Caco-2 (cell line): ENCODE measurements at regions of chr12 and their contacts with region 1.

Region 1: GRCh38 chr12:62210422-62210821 is 49.8 kb upstream of the USP15 start:
- DNase-seq: peak in 1 of 2 experiments; percentile 34
- H3K4me3 ChIP-seq: no peak overlapping the region
- H3K4me3 Mint-ChIP-seq: no peak overlapping the region
- H3K27ac Mint-ChIP-seq: no peak overlapping the region
- H3K4me1 ChIP-seq: peaks cover 7% of the 10 kb centered on the region
- H3K4me1 Mint-ChIP-seq: no peaks in the 10 kb centered on the region
- H3K27me3 ChIP-seq: no peaks in the 10 kb centered on the region
- H3K27me3 Mint-ChIP-seq: peaks cover 3% of the 10 kb centered on the region
- CTCF ChIP-seq: peak; percentile 64 to 83

Region 2: DNA sequence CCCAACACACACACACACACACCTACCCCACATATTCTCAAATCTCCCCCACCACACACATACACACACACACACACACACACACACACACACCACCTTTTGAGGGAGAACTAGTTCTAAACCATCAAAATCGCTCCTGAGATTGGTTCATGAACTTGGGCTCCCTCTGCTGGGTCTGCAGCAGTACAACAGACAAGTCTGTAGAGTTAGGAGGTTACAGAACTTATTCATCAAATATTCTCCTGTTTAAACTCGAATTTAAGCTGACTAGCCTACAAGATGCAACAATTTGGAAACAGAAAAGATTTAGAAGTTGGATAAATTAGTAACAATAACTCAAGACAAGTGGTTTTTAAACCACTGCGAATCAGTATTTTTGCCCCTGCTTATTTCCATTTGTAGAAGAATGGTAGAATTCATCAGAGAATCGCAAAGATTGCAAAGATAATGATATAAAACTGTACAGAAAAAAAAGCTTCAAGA is 86.7 kb before region 1 on chr12:
- CTCF ChIA-PET with region 1: interaction called, 3 read pairs
- POLR2A ChIA-PET with region 1: no interaction called
- intact Hi-C with region 1: loop called (anchors 1 kb)
- DNase-seq: peak; percentile 36 to 51
- H3K4me3 ChIP-seq: no peak overlapping the region
- H3K4me3 Mint-ChIP-seq: no peak overlapping the region
- H3K27ac Mint-ChIP-seq: no peak overlapping the region
- H3K4me1 ChIP-seq: no peaks in the 10 kb centered on the region
- H3K4me1 Mint-ChIP-seq: no peaks in the 10 kb centered on the region
- H3K27me3 ChIP-seq: no peaks in the 10 kb centered on the region
- H3K27me3 Mint-ChIP-seq: peaks cover 12% of the 10 kb centered on the region
- CTCF ChIP-seq: peak; percentile 48 to 87